ENCODE measurements at regions of chr2 and their contacts with region 1.

Region 1: GRCh38 chr2:192162392-192163042 is 32.2 kb downstream of the TMEFF2 start:
- DNase-seq: peak; percentile 33
- ATAC-seq: peak; percentile 78
- H3K4me3 ChIP-seq: no peak overlapping the region
- H3K27ac ChIP-seq: no peak overlapping the region
- H3K4me1 ChIP-seq: no peaks in the 10 kb centered on the region
- H3K27me3 ChIP-seq: no peaks in the 10 kb centered on the region
- CTCF ChIP-seq: peak; percentile 83; the same call in 1 of the 2 replicates

Region 2: GRCh38 chr2:191555092-191555742 is 607.3 kb before region 1 on chr2:
- CTCF ChIA-PET with region 1: interaction called, 7 read pairs
- POLR2A ChIA-PET with region 1: no interaction called
- in situ Hi-C with region 1: no loop called
- intact Hi-C with region 1: loop called (anchors 5 kb)
- DNase-seq: peak; percentile 73
- ATAC-seq: peak; percentile 93
- H3K4me3 ChIP-seq: peak overlapping the region; percentile 10 to 41; a peak in 3 of 4 replicates
- H3K27ac ChIP-seq: no peak overlapping the region
- H3K4me1 ChIP-seq: peaks cover 6% of the 10 kb centered on the region; the same call in 1 of the 2 replicates
- H3K27me3 ChIP-seq: peaks cover 4% of the 10 kb centered on the region
- CTCF ChIP-seq: peak; percentile 84

Region 3: DNA sequence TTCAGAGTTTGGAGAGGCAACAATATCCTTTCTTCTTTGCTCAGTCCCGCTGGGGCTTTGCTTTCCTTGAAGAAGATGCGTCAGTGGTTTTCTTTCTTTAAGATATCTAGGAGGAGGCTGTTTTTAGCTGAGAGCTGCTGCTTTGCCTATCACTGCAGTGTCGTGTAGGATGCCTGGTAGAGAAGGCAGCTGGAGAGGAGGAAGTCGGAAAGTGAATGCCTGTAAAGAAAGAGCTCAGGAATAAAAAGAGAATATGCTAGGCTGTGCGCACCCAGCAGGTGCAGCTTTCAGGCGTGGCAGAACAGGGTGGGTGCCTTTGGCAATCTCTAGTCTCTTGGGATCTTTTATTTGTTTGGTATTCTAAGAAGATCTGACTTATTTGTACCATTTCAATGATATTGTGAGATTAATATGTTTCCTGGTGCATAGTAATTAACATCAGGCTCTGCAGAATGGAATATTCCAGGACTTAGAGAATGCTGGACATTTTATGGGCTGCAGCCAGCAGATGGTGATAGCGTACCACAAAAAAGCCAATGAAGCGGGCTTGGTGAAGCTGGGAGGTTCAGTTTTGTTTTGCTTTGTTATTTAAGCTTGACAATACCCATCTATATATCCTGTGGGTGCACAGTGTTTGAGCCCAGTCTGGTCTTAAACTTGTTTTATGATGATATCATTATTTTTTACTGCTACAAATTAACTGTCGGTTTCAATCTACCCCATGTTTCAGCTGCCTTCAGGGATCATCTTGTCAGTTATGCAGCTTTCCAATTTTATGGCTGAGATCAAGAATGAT is 350.5 kb before region 1 on chr2:
- CTCF ChIA-PET with region 1: interaction called, 27 read pairs
- POLR2A ChIA-PET with region 1: no interaction called
- in situ Hi-C with region 1: no loop called
- intact Hi-C with region 1: loop called (anchors 1 kb)
- DNase-seq: peak; percentile 60
- ATAC-seq: peak; percentile 94
- H3K4me3 ChIP-seq: no peak overlapping the region
- H3K27ac ChIP-seq: no peak overlapping the region
- H3K4me1 ChIP-seq: no peaks in the 10 kb centered on the region; the same call in 1 of the 2 replicates
- H3K27me3 ChIP-seq: no peaks in the 10 kb centered on the region
- CTCF ChIP-seq: peak; percentile 83

Region 4: GRCh38 chr2:191866675-191867506 is 295.6 kb before region 1 on chr2:
- CTCF ChIA-PET with region 1: no interaction called
- POLR2A ChIA-PET with region 1: no interaction called
- in situ Hi-C with region 1: no loop called
- intact Hi-C with region 1: loop called (anchors 2 kb)
- DNase-seq: peak; percentile 55
- ATAC-seq: peak; percentile 91
- H3K4me3 ChIP-seq: no peak overlapping the region
- H3K27ac ChIP-seq: peak overlapping the region; percentile 83
- H3K4me1 ChIP-seq: peaks cover 7% of the 10 kb centered on the region; the same call in 1 of the 2 replicates
- H3K27me3 ChIP-seq: no peaks in the 10 kb centered on the region
- CTCF ChIP-seq: no peak

Region 5: DNA sequence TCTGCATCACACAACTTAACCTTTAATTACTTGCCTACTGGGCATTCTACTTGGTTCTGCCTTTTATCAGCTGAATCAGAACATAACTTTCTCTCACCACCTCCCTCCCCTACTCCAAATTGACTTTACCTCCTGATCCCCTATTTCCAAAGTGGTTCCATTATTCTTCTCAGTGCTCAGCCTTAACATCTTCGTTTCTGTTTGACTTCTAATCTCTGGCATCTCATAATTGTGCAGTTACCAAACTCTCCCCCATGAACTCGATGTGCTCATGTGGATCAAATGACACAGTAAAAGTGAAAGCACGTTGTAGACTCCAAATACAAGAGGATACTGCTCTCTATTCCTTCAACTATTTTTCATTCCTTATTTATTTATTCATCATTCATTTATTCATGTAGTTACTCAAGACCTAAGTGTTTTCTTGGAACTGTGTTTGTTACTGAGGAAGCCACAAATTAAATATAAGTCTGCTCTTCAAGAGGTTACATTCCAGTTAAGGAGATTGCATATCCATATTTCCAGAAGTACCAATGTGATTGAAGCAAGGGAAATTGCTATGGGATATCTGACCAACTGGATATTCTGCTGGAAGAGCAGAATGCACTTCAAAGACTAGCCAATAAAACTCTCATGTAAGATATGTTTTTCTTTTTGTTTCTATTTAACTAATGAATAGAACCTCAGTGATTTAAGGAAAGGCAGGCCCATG is 126.6 kb before region 1 on chr2:
- CTCF ChIA-PET with region 1: no interaction called
- POLR2A ChIA-PET with region 1: no interaction called
- in situ Hi-C with region 1: no loop called
- intact Hi-C with region 1: no loop called
- DNase-seq: no peak
- ATAC-seq: no peak
- H3K4me3 ChIP-seq: no peak overlapping the region
- H3K27ac ChIP-seq: no peak overlapping the region
- H3K4me1 ChIP-seq: no peaks in the 10 kb centered on the region
- H3K27me3 ChIP-seq: no peaks in the 10 kb centered on the region
- CTCF ChIP-seq: no peak

Measured in Panc1 (cell line).